ENCODE measurements at regions of chr15 and their contacts with region 1.

Region 1: DNA sequence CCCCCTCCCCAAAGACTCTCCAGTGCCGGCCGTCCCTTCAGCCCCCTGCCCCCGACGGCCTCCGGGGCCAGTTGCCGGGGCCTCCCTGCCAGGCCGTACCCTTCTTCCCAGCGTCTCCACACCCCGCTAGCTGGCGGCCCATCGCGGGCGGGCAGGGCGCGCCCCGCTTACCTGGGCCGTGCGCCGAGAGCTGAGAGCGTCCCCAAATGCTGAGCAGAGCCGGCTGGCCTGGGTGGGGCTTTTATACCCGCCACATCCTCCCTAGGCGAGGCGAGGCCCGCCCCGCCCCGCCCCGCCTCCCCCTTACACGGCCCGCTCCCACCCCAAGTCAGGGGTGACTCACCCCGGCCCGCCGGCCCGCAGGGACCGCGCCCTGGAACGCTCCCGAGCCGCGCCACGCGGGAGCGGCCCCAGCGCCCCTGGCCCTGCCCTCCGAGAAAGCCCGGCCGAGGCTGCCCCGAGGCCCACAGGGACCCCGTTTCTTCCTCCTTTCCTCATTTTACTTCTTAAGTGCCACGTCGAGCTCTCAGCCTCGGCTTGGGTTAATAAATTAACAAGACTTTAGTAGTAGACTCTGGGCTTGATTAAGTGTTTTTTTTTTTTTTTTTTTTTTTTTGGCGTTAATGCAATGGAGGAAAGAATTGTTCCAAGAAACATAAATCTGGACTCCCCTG is at the start of gene ANXA2:
- DNase-seq: peak; percentile 91
- ATAC-seq: peak; percentile 74
- H3K4me3 Mint-ChIP-seq: peak within 1 kb of the TSS; percentile 83
- H3K27ac Mint-ChIP-seq: peak within 1 kb of the TSS; percentile 89
- H3K4me1 Mint-ChIP-seq: peaks cover 36% of the 10 kb centered on the region
- H3K27me3 Mint-ChIP-seq: peaks cover 4% of the 10 kb centered on the region
- total RNA-seq, gene ANXA2: 65.9 to 80.2 TPM

Region 2: GRCh38 chr15:59313641-59314332 is 1084.1 kb before region 1 on chr15:
- CTCF ChIA-PET with region 1: no interaction called
- POLR2A ChIA-PET with region 1: no interaction called
- intact Hi-C with region 1: no loop called
- DNase-seq: peak; percentile 7
- ATAC-seq: no peak
- H3K4me3 Mint-ChIP-seq: no peak overlapping the region
- H3K27ac Mint-ChIP-seq: no peak overlapping the region
- H3K4me1 Mint-ChIP-seq: no peaks in the 10 kb centered on the region
- H3K27me3 Mint-ChIP-seq: no peaks in the 10 kb centered on the region

Region 3: GRCh38 chr15:59553879-59554735 is 843.8 kb before region 1 on chr15:
- CTCF ChIA-PET with region 1: no interaction called
- POLR2A ChIA-PET with region 1: no interaction called
- intact Hi-C with region 1: no loop called
- DNase-seq: no peak
- ATAC-seq: no peak
- H3K4me3 Mint-ChIP-seq: no peak overlapping the region
- H3K27ac Mint-ChIP-seq: no peak overlapping the region
- H3K4me1 Mint-ChIP-seq: no peaks in the 10 kb centered on the region
- H3K27me3 Mint-ChIP-seq: peaks cover 2% of the 10 kb centered on the region

Region 4: GRCh38 chr15:60448668-60449360 is 50.9 kb after region 1 on chr15:
- CTCF ChIA-PET with region 1: no interaction called
- POLR2A ChIA-PET with region 1: no interaction called
- intact Hi-C with region 1: no loop called
- DNase-seq: no peak
- ATAC-seq: no peak
- H3K4me3 Mint-ChIP-seq: no peak overlapping the region
- H3K27ac Mint-ChIP-seq: no peak overlapping the region
- H3K4me1 Mint-ChIP-seq: no peaks in the 10 kb centered on the region
- H3K27me3 Mint-ChIP-seq: no peaks in the 10 kb centered on the region

Region 5: GRCh38 chr15:60478566-60479360 is 80.9 kb after region 1 on chr15 and contains the start of gene ICE2:
- CTCF ChIA-PET with region 1: interaction called, 3 read pairs
- POLR2A ChIA-PET with region 1: interaction called, 3 read pairs
- intact Hi-C with region 1: loop called (anchors 1 kb)
- DNase-seq: peak; percentile 98
- ATAC-seq: peak; percentile 93
- H3K4me3 Mint-ChIP-seq: peak within 1 kb of the TSS; percentile 91
- H3K27ac Mint-ChIP-seq: peak within 1 kb of the TSS; percentile 98
- H3K4me1 Mint-ChIP-seq: peaks cover 55% of the 10 kb centered on the region
- H3K27me3 Mint-ChIP-seq: no peaks in the 10 kb centered on the region
- total RNA-seq, gene ICE2: 72.8 to 81.6 TPM

Region 6: GRCh38 chr15:60580650-60581376 is 182.9 kb after region 1 on chr15:
- CTCF ChIA-PET with region 1: no interaction called
- POLR2A ChIA-PET with region 1: interaction called, 8 read pairs
- intact Hi-C with region 1: loop called in 1 of 2 experiments (anchors 2 kb)
- DNase-seq: peak; percentile 64
- ATAC-seq: peak; percentile 80
- H3K4me3 Mint-ChIP-seq: peak overlapping the region; percentile 54
- H3K27ac Mint-ChIP-seq: peak overlapping the region; percentile 87
- H3K4me1 Mint-ChIP-seq: peaks cover 90% of the 10 kb centered on the region
- H3K27me3 Mint-ChIP-seq: no peaks in the 10 kb centered on the region

Region 7: DNA sequence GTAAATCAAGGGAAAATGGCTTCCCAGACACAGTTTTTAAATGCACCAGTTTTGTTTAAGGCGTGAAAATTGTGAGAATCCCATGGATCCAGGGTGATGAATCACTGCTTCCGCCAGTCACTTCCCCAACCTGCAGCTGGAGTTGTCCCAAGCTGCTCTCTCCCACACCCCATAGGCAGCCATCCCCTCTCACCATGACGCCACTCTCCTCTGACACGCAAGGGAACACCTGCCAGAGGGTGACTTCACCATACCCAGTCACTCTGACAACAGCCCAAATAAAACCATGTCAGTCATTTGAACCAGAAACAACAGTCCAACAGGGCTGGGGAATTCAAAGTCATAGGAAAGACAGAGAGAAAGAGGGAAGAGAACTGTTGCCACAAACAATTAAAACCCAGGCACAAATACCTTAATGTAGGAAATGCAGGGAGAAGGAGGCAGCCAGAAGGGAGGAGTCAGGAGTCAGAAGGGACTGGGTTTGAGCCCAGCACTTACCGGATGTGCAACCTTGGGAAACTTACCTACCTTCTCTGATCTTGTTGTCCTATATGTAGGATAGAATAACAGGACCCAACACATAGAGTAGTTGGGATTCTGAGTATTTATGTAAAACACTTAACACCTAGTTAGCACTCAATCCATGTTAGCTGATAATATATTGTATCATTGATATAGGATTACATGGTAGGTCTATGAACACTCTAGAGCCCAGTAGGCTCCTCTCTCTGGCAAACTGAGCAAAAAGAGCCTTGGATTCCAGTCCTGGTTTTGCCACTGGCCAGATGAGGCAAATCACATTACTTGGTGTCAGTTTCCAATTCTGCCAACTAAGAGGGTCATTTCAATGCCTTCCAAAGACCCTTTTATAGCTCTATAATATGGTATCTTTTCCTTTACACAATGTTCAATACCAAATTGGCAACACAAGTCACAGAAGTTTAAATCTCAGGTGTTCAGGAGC is 407.4 kb after region 1 on chr15:
- CTCF ChIA-PET with region 1: no interaction called
- POLR2A ChIA-PET with region 1: no interaction called
- intact Hi-C with region 1: loop called in 1 of 2 experiments (anchors 10 kb)
- DNase-seq: no peak
- ATAC-seq: no peak
- H3K4me3 Mint-ChIP-seq: no peak overlapping the region
- H3K27ac Mint-ChIP-seq: no peak overlapping the region
- H3K4me1 Mint-ChIP-seq: peaks cover 75% of the 10 kb centered on the region
- H3K27me3 Mint-ChIP-seq: no peaks in the 10 kb centered on the region